Naive thymus-derived CD4-positive, alpha-beta T cell (primary cell): ENCODE measurements at regions of chr11 and their contacts with region 1.

Region 1: DNA sequence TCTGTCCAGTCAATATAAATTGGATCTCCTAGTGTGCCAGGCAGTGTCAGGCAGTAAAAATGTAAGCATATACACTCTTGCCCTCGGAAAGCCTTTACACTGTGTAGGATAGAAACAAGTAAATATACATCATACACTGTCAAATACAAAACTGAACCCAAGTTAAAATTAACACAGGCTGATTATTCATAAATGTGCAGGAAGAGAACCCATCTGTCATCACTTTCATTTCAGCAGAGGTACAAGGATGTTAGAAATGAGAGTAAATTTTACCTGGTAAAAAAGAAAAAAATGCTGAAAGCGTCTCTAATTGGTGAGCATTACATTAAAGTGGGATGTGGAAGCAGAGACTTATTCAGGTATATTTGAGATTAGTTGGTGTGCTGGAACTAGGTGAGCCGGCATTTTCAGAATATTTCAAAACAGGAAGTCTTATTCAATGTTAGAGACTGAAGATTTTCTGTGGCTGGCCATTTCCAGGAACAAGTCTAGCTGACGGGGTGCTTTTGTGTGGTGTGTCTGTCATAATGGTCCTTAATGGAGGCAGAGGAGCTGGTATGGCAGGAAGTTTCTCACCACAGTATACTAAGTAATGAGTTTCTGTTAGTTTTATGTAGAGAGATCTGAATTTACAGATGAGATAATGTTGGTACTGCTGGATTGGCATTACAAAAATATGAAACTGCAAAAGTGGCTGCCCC is 192.6 kb downstream of the CASP12 start:
- DNase-seq: peak; percentile 10 to 92 (median 87)
- ATAC-seq: peak; percentile 99
- H3K4me3 ChIP-seq: peak overlapping the region; percentile 54
- H3K4me3 Mint-ChIP-seq: peak overlapping the region; percentile 65 to 87 (median 72)
- H3K27ac ChIP-seq: peak overlapping the region; percentile 67
- H3K27ac Mint-ChIP-seq: peak overlapping the region; percentile 82 to 98 (median 96)
- H3K4me1 ChIP-seq: peaks cover 40 to 49% of the 10 kb centered on the region in 2 donors
- H3K4me1 Mint-ChIP-seq: peaks cover 33 to 75% (median 60%) of the 10 kb centered on the region in 7 donors
- H3K27me3 ChIP-seq: no peaks in the 10 kb centered on the region
- H3K27me3 Mint-ChIP-seq: no peaks in the 10 kb centered on the region

Region 2: DNA sequence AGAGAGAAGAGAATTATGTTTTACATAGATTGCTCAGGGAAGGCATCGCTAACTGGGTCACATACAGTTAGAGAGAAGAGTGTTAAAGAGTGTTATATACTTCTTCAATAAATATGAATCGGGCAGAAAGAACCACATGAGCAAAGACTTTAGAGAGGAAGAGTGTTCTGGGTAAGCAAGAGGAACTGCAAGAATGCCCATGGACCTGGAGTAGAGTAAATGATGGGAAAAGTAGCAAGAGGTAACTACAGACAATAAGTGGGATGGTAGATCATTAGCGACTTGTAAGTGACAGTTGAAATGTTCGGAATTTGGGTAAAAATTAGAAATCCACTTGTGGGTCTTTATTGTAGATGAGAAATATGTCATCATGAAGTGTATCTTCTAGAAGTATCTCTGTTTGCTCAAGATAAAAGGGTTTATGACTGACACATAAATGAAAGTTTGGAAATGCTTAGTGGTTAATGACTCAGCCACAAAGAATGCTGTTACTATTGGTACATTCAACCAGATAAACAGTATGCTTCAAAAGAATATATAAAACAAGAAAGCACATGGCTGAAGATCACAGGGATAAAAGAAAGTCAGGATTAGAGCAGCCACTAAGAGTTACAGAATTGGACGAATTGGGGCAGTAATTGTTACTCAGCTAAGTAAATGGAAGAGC is 36.7 kb before region 1 on chr11:
- CTCF ChIA-PET with region 1: no interaction called
- POLR2A ChIA-PET with region 1: no interaction called
- intact Hi-C with region 1: loop called (anchors 2 to 5 kb)
- DNase-seq: no peak
- ATAC-seq: peak; percentile 79
- H3K4me3 ChIP-seq: no peak overlapping the region
- H3K4me3 Mint-ChIP-seq: peak overlapping the region in 1 of 10 donors; percentile 10
- H3K27ac ChIP-seq: no peak overlapping the region
- H3K27ac Mint-ChIP-seq: peak overlapping the region in 3 of 9 donors; percentile 4 to 20 (median 10)
- H3K4me1 ChIP-seq: no peaks in the 10 kb centered on the region
- H3K4me1 Mint-ChIP-seq: peaks cover 0 to 20% (median 8%) of the 10 kb centered on the region in 7 donors
- H3K27me3 ChIP-seq: no peaks in the 10 kb centered on the region
- H3K27me3 Mint-ChIP-seq: peaks cover 0 to 14% (median 0%) of the 10 kb centered on the region in 5 donors

Region 3: DNA sequence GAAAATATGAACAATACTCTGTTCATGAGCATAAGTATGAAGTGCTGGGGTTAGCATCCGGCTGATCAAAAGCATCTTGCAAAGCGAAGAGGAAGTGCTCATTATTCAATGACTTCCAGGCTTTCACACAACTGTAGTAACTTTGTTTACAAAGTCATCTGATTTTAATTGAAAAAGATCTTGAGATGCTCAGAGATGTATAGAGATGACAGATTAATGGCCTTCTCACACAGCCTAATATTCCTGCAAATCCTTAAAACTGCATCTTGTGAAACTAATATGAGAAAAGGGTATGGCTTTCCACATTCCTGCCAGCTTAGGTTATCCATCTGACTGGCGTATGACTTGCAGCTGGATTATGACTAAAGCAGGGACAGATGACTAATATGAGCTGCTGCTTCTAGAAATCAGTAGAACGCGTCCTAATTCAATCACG is 67.2 kb after region 1 on chr11:
- CTCF ChIA-PET with region 1: no interaction called
- POLR2A ChIA-PET with region 1: no interaction called
- intact Hi-C with region 1: loop called in 1 of 2 experiments (anchors 2 kb)
- DNase-seq: peak in 6 of 9 donors; percentile 24 to 49 (median 32)
- ATAC-seq: peak; percentile 69
- H3K4me3 ChIP-seq: no peak overlapping the region
- H3K4me3 Mint-ChIP-seq: peak overlapping the region in 6 of 10 donors; percentile 15 to 59 (median 34)
- H3K27ac ChIP-seq: no peak overlapping the region
- H3K27ac Mint-ChIP-seq: peak overlapping the region in 6 of 9 donors; percentile 9 to 53 (median 16)
- H3K4me1 ChIP-seq: peaks cover 0 to 13% of the 10 kb centered on the region in 2 donors
- H3K4me1 Mint-ChIP-seq: peaks cover 3 to 24% (median 20%) of the 10 kb centered on the region in 7 donors
- H3K27me3 ChIP-seq: no peaks in the 10 kb centered on the region
- H3K27me3 Mint-ChIP-seq: peaks cover 0 to 3% (median 0%) of the 10 kb centered on the region in 5 donors

Region 4: DNA sequence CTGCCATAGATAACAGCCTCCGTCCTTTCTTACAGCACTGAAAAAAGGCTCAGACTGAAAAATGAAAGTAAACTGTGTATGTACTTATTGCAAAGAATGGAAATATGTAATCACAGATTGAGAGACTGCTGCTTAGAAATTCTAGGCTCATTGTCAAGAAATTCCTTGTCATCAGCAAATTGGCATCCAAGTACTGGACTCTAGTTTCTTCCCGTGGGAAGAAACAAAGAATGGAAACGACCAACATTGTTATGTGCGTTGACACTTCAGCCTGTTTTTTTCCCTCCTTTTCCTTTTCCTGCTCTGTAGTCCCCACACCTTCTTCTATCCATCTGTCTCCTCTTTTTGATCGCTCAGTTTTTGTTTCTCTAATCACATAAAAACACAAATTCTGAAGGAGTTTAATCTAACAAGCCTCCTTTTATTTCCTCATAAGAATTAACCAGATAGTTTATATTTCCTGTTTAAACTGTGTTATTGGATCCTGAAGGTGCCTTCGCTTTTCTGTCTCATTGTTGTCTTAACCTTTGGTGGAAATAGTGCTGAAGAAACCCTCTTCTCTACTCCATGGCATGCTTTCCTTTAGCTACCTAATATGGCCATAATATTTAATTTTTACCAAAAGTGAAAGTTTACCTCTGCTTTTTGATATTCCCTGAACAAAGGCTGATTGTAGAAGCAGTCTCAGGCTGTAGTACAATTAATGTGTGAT is 212.6 kb after region 1 on chr11:
- CTCF ChIA-PET with region 1: interaction called, 3 read pairs
- POLR2A ChIA-PET with region 1: no interaction called
- intact Hi-C with region 1: loop called in 1 of 2 experiments (anchors 1 kb)
- DNase-seq: peak in 4 of 9 donors; percentile 14 to 46 (median 32)
- ATAC-seq: peak; percentile 82
- H3K4me3 ChIP-seq: peak overlapping the region; percentile 60
- H3K4me3 Mint-ChIP-seq: peak overlapping the region; percentile 76 to 99 (median 91)
- H3K27ac ChIP-seq: peak overlapping the region; percentile 65
- H3K27ac Mint-ChIP-seq: peak overlapping the region; percentile 58 to 97 (median 92)
- H3K4me1 ChIP-seq: peaks cover 12 to 34% of the 10 kb centered on the region in 2 donors
- H3K4me1 Mint-ChIP-seq: peaks cover 30 to 72% (median 55%) of the 10 kb centered on the region in 7 donors
- H3K27me3 ChIP-seq: no peaks in the 10 kb centered on the region
- H3K27me3 Mint-ChIP-seq: peaks cover 0 to 3% (median 0%) of the 10 kb centered on the region in 5 donors

Region 5: GRCh38 chr11:105100206-105100605 is 394.6 kb after region 1 on chr11:
- CTCF ChIA-PET with region 1: no interaction called
- POLR2A ChIA-PET with region 1: no interaction called
- intact Hi-C with region 1: loop called in 1 of 2 experiments (anchors 1 kb)
- DNase-seq: peak in 2 of 9 donors; percentile 3 to 4
- ATAC-seq: peak; percentile 87
- H3K4me3 ChIP-seq: peak overlapping the region; percentile 53
- H3K4me3 Mint-ChIP-seq: peak overlapping the region in 8 of 10 donors; percentile 16 to 87 (median 56)
- H3K27ac ChIP-seq: no peak overlapping the region
- H3K27ac Mint-ChIP-seq: peak overlapping the region in 6 of 9 donors; percentile 1 to 93 (median 4)
- H3K4me1 ChIP-seq: peaks cover 6 to 18% of the 10 kb centered on the region in 2 donors
- H3K4me1 Mint-ChIP-seq: peaks cover 23 to 43% (median 31%) of the 10 kb centered on the region in 7 donors
- H3K27me3 ChIP-seq: no peaks in the 10 kb centered on the region
- H3K27me3 Mint-ChIP-seq: no peaks in the 10 kb centered on the region